ENCODE measurements at regions of chr3 and their contacts with region 1.

Region 1: DNA sequence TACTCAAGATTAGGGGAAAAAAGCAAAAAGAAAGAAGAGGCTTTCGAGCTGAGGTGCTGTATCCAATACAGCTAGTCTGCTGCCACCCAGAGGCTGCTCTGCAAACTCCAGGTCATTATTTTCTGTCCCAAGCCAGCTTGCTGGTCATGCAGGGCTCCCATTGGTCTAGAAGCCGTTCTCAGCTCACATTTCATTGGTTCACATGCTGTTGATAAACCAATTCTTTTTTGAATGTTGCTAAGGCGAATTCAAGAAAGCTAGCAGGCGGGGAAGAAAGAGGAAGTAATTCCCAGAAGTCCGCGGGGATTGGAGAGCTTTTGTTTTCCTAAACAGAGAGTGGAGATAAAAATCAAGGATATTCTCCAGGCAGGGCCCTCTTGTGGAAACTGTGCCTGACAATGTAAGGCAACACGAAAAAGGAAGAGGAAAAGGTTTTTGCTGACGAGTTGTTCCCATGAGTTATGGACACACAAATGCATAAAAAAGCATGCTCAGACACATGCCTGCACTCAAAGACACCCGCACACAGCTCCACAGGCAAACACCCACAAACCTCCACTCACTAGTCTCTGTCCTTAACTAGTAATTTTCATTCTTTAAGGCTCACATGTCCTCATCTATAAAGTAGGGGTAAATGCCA is 33.4 kb downstream of the FSTL1 start:
- DNase-seq: peak; percentile 84 to 96
- ATAC-seq: peak; percentile 31 to 87 (median 79)
- H3K4me3 ChIP-seq: peak overlapping the region in 6 of 10 donors; percentile 27 to 38 (median 35)
- H3K27ac ChIP-seq: peak overlapping the region; percentile 42 to 89 (median 84)
- H3K4me1 ChIP-seq: peaks cover 18 to 75% (median 68%) of the 10 kb centered on the region in 9 donors
- H3K27me3 ChIP-seq: no peaks in the 10 kb centered on the region
- CTCF ChIP-seq: peak; percentile 75 to 95 (median 89)

Region 2: DNA sequence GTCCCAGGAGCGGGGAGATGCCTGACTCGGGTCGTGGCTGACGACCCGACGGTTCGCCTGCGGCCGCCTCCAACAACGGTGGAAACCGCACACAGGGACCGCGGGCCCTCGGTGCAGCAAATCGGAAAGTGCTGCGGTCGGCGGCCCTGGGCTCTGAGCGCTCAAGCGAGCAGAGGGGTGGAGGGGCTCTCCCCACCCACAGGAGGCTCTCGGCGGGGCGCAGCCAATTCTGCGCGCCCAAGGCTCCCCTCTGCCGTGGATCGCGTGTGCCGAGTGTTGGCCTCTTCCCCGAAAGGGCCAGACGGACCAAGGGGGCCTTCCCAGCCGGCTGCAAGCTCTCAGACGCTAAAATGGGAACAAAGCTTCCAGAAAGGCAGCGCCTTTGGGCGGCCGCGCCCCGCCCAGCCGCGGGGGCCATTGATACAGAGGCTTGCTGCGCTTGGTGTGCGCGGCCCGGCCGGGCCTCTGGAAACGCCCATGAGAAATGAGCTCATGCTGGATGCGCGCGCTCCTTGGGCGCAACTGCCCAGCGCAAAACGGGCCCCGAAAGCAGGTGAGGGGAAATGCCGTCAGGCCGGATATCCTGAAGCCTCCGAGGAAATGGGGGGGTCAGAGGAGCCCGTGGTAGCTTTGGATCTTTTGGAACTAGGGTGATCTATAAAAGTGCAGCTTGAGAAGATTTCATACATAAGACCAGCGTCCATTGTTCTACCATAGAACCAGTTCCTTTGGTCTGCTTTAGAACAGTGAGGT is 322.0 kb before region 1 on chr3:
- intact Hi-C with region 1: loop called in 1 of 10 experiments (anchors 10 kb)
- DNase-seq: peak; percentile 88 to 91
- ATAC-seq: peak; percentile 56 to 81 (median 73)
- H3K4me3 ChIP-seq: peak overlapping the region; percentile 74 to 95 (median 86)
- H3K27ac ChIP-seq: peak overlapping the region; percentile 98 to 100 (median 99)
- H3K4me1 ChIP-seq: peaks cover 0 to 31% (median 26%) of the 10 kb centered on the region in 9 donors
- H3K27me3 ChIP-seq: no peaks in the 10 kb centered on the region
- CTCF ChIP-seq: no peak

Region 3: GRCh38 chr3:120245386-120245785 is 172.0 kb before region 1 on chr3:
- intact Hi-C with region 1: loop called (anchors 1 to 10 kb)
- DNase-seq: no peak
- ATAC-seq: no peak
- H3K4me3 ChIP-seq: no peak overlapping the region
- H3K27ac ChIP-seq: no peak overlapping the region
- H3K4me1 ChIP-seq: no peaks in the 10 kb centered on the region
- H3K27me3 ChIP-seq: peaks cover 0 to 9% (median 0%) of the 10 kb centered on the region in 7 donors
- CTCF ChIP-seq: no peak

Region 4: GRCh38 chr3:120450600-120451271 is 33.3 kb after region 1 on chr3 and contains the start of gene FSTL1:
- intact Hi-C with region 1: loop called in 1 of 10 experiments (anchors 1 kb)
- DNase-seq: peak; percentile 73 to 74
- ATAC-seq: peak; percentile 78 to 89 (median 84)
- H3K4me3 ChIP-seq: peak within 1 kb of the TSS; percentile 75 to 99 (median 92)
- H3K27ac ChIP-seq: peak within 1 kb of the TSS; percentile 86 to 99 (median 96)
- H3K4me1 ChIP-seq: peaks cover 6 to 48% (median 40%) of the 10 kb centered on the region in 9 donors
- H3K27me3 ChIP-seq: peaks cover 0 to 38% (median 0%) of the 10 kb centered on the region in 7 donors
- CTCF ChIP-seq: no peak
- total RNA-seq, gene FSTL1: 100 to 346 (median 213) TPM

Region 5: DNA sequence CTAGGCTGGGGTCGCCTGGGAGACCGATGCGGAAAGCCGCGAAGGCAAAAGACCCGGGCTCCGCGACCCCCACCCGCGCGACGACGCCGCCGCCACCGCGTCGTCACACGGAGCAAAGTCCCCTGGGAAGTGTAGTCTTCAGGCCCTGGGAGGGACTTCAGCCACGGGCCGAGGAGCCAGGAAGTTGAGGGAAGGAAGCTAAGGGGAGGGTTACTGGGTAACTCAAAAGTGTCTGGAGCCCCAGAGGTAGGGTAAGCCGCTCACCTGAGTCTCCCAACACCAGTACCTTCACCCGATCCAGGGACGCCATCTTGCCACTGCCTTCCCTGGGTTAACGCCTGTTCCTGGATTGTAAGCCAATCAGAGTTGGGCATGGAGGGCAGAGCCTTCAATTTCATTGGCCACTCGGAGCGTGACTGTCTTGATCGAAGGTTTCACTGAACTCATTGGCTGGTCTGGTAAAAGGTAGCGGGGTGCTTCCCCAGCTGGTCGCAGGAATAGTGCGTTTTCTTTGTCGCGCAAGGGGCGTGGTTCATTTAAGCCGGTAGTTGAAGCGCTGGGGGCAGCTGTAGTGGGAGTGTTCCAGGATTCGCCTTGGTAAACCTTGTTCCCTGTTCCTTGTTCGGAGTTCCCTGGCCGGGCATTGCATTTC is 324.9 kb after region 1 on chr3 and contains the starts of genes GTF2E1 and RABL3:
- intact Hi-C with region 1: loop called in 1 of 10 experiments (anchors 5 kb)
- DNase-seq: peak; percentile 90 to 99
- ATAC-seq: peak; percentile 99 to 100 (median 100)
- H3K4me3 ChIP-seq: peak within 1 kb of the TSS; percentile 64 to 95 (median 84)
- H3K27ac ChIP-seq: peak within 1 kb of the TSS; percentile 73 to 99 (median 94)
- H3K4me1 ChIP-seq: peaks cover 4 to 32% (median 21%) of the 10 kb centered on the region in 9 donors
- H3K27me3 ChIP-seq: no peaks in the 10 kb centered on the region
- CTCF ChIP-seq: no peak
- total RNA-seq, gene GTF2E1: 7.9 to 16.2 (median 11.7) TPM
- total RNA-seq, gene RABL3: 13.8 to 33.9 (median 23.3) TPM

Measured in heart right ventricle (tissue), 16 donors.